Transverse colon (tissue), 4 donors: ENCODE measurements at regions of chr18 and their contacts with region 1.

Region 1: DNA sequence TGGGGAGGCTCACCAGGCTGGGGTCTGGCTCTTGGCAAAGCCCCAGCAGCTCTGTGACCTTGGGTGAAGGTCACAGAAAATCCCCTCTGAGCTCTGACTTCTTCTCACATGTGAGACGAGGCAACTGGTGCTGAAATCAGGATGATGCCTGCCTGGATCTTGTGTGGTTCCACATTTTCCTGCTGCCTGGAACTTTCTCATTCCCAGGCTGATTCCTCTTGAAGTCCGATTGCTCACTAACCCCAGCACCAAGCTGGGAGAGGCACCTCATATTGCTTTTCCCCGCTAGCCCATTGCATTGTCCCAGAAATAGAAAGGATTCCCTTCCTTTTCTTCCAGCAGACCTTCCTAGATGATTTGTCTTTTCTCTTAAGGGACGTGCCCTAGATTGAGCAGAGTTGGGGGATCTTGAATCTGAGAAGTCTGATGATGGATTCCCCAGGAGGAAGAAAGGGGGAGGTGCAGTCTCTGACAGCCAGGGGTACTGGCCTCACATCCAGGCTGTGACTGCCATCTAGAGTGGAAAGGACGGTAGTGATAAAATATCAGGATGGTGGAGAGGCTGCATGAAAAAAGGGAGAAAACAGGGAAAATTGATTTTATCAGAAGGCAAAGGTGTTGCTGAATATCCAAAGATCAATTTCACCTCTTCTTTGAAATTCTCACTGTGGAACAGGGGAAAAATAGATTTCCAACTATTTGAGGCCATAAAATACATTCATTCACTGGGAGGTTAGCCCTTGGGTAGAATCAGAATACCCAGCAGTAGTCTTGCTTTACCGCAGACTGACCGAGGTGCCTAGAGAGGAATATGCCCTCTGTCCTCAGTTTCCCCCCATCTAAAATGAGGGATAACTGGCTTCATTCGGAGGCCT is 96.3 kb downstream of the FAM210A start:
- DNase-seq: peak; percentile 49
- H3K4me3 ChIP-seq: no peak overlapping the region
- H3K27ac ChIP-seq: peak overlapping the region in 1 of 4 donors; percentile 12
- H3K4me1 ChIP-seq: peaks cover 0 to 10% (median 1%) of the 10 kb centered on the region in 4 donors
- H3K27me3 ChIP-seq: no peaks in the 10 kb centered on the region
- CTCF ChIP-seq: peak; percentile 66 to 87 (median 78)
- EP300 ChIP-seq: no peak
- POLR2A ChIP-seq: no peak

Region 2: GRCh38 chr18:13112982-13113381 is 517.1 kb before region 1 on chr18:
- in situ Hi-C with region 1: loop called in 1 of 4 experiments (anchors 25 kb)
- intact Hi-C with region 1: loop called (anchors 10 kb)
- DNase-seq: peak; percentile 47
- H3K4me3 ChIP-seq: no peak overlapping the region
- H3K27ac ChIP-seq: no peak overlapping the region
- H3K4me1 ChIP-seq: no peaks in the 10 kb centered on the region
- H3K27me3 ChIP-seq: no peaks in the 10 kb centered on the region
- CTCF ChIP-seq: peak; percentile 36 to 54 (median 46)
- EP300 ChIP-seq: no peak
- POLR2A ChIP-seq: no peak

Region 3: GRCh38 chr18:13216092-13216582 is 413.9 kb before region 1 on chr18:
- in situ Hi-C with region 1: loop called in 2 of 4 experiments (anchors 25 kb)
- intact Hi-C with region 1: loop called (anchors 5 kb)
- DNase-seq: peak; percentile 90
- H3K4me3 ChIP-seq: no peak overlapping the region
- H3K27ac ChIP-seq: peak overlapping the region; percentile 90 to 92 (median 91)
- H3K4me1 ChIP-seq: peaks cover 19 to 45% (median 30%) of the 10 kb centered on the region in 4 donors
- H3K27me3 ChIP-seq: no peaks in the 10 kb centered on the region
- CTCF ChIP-seq: peak; percentile 56 to 87 (median 64)
- EP300 ChIP-seq: no peak
- POLR2A ChIP-seq: peak; percentile 28

Region 4: GRCh38 chr18:13381944-13382365 is 248.1 kb before region 1 on chr18:
- in situ Hi-C with region 1: no loop called
- intact Hi-C with region 1: loop called (anchors 5 kb)
- DNase-seq: peak; percentile 66
- H3K4me3 ChIP-seq: peak overlapping the region in 3 of 4 donors; percentile 15 to 41 (median 27)
- H3K27ac ChIP-seq: peak overlapping the region; percentile 74 to 89 (median 84)
- H3K4me1 ChIP-seq: peaks cover 12 to 36% (median 30%) of the 10 kb centered on the region in 4 donors
- H3K27me3 ChIP-seq: no peaks in the 10 kb centered on the region
- CTCF ChIP-seq: peak in 1 of 5 experiments; percentile 1
- EP300 ChIP-seq: no peak
- POLR2A ChIP-seq: no peak

Region 5: DNA sequence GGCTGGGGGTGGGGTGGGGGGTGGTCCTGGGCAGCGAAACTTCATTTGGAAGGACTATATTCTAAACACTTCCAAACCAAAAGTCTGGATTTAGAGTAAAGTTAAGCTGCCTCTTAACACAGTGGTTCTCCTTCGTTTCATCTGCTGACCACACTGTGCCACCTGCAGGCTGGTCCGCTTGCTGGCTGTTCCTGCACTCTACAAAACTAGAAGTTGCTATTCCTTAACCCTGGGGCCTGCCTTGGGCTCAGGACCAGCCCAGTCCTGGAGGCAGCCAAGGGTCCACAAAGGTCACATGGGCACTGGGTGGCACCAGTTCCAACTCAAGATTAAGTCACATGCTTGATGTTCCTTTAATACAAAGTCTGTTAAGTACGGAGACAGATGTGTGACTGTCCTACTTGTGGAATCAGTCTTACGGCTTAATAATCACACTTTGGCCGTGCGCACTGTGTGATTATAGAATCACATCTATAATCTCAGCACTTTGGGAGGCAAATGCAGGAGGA is 99.1 kb before region 1 on chr18:
- in situ Hi-C with region 1: no loop called
- intact Hi-C with region 1: loop called (anchors 5 kb)
- DNase-seq: peak; percentile 62
- H3K4me3 ChIP-seq: no peak overlapping the region
- H3K27ac ChIP-seq: no peak overlapping the region
- H3K4me1 ChIP-seq: no peaks in the 10 kb centered on the region
- H3K27me3 ChIP-seq: no peaks in the 10 kb centered on the region
- CTCF ChIP-seq: peak; percentile 41 to 49 (median 48)
- EP300 ChIP-seq: no peak
- POLR2A ChIP-seq: no peak

Region 6: DNA sequence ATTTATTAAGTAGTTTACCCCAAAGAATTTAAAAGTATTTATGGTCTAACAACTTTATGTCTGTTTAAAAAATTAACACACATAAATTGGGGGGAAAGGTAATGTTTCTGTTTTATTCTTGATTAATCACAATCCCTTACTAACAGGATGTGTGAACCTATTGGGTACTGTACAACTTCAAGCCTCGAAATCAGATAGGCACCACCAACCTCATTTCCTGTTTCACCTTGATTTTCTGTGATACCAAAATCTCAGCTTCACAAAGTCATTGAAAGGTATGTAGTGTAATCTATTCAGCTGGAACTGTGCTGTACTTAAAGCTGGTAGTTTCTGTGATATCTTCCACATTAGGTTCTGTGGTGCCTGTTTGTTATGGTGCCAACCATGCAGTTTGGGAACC is 100.4 kb after region 1 on chr18:
- in situ Hi-C with region 1: no loop called
- intact Hi-C with region 1: no loop called
- DNase-seq: no peak
- H3K4me3 ChIP-seq: no peak overlapping the region
- H3K27ac ChIP-seq: no peak overlapping the region
- H3K4me1 ChIP-seq: peaks cover 7 to 12% (median 9%) of the 10 kb centered on the region in 4 donors
- H3K27me3 ChIP-seq: no peaks in the 10 kb centered on the region
- CTCF ChIP-seq: no peak
- EP300 ChIP-seq: no peak
- POLR2A ChIP-seq: no peak